ENCODE measurements at regions of chr5 and their contacts with region 1.

Region 1: DNA sequence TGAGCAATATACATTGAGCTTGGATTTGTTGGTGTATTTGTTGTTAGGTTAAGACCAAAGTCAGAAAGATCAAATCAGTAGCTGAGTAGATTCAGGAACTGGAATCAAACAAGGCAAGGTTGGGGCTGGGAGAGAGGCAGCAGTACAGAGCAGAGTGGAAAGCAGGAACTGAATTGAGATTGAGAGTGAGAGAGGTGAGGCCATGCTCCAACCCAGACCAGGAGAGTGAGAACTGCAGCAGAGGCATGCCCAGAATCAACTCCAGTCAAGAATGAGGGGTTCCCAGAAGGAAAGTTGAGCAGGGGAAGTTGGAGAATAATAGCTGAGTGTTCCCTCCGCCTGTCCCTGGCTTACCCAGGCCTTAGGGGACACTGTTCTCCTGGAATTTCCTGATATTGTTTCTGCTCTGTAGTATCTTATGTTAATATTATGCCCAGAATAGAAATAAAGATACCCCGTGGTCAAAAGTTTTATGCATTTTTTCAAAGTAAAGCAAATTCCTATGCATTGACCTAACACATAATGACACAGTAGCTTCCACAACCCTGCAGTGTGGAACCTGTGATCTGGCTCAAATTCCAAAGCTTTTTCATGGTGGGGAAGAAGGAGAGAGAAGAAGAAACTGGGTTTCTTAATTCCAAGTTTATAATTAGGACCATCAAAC is 82.7 kb downstream of the SV2C start:
- DNase-seq: no peak
- CTCF ChIP-seq: no peak

Region 2: GRCh38 chr5:76154009-76154690 is 11.7 kb before region 1 on chr5:
- CTCF ChIA-PET with region 1: interaction called, 18 read pairs
- POLR2A ChIA-PET with region 1: no interaction called
- DNase-seq: no peak
- CTCF ChIP-seq: no peak

Region 3: GRCh38 chr5:76191826-76192490 is 26.1 kb after region 1 on chr5:
- CTCF ChIA-PET with region 1: no interaction called
- POLR2A ChIA-PET with region 1: no interaction called
- DNase-seq: no peak
- CTCF ChIP-seq: no peak

Region 4: DNA sequence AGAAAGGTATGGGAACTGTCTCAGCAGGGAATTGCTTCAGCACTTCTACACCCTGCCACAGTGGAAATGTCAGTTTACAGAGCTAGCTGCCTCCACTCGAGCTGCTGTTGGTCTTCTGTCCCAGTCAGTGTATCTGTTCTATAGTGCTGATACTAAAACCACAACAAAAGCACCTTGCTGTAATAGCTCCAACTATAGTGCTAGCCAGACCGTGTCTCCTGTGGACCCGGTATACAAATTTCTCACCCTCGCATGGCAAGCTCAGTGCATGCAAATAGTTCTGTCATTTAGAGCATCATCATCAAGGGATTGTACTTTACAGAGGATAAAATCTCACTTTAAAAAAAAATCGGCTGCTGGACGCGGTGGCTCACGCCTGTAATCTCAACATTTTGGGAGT is 185.7 kb after region 1 on chr5:
- CTCF ChIA-PET with region 1: no interaction called
- POLR2A ChIA-PET with region 1: no interaction called
- DNase-seq: peak; percentile 75
- CTCF ChIP-seq: no peak